HCT116 (cell line): ENCODE measurements at regions of chr5 and their contacts with region 1.

Region 1: DNA sequence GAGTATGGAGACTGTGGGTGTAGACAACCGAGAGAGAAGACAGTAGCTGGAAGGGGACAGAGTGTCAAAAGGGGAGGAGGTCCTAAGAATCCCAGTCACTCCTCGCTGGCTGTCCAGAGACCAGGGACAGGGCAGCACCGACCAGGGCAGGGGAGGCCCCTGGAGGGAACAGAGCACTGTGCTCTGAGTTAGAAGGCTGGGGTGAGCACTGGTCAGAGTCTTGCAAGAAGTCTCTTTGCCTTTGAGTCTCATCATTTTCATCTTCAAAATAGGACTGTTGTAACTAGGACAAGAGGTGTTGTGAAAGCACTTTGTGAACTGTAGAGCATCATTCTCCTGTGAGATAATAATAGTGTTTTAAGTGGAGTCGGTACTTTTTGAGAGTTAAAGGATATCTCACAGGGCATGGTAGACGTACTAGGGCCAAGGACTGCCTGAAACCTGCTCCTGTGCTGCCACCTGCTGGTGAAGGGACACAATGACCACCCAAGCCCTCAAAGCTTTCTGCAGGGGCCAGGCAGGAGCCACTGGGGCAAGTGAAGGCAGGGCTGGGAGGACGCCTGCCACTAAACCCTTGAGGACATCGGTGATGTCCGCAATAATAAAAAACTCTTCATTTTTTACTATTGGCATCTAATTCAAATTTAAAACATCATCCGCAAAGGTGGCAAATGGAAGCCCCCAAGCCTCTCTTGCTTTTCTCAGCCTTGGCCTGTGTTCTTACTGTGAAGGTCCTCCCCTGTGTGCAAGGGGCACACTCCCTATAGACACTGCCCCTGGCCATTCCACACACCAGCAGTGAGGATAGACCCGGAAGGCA is 28.2 kb downstream of the SLC6A7 start:
- DNase-seq: peak; percentile 64
- ATAC-seq: peak; percentile 99
- H3K4me3 ChIP-seq: no peak overlapping the region
- H3K27ac ChIP-seq: no peak overlapping the region
- H3K4me1 ChIP-seq: 0 out of 4 replicates have a peak, but pooled peaks cover 0 to 2% of the 10 kb centered on the region in 2 experiments
- H3K27me3 ChIP-seq: no peaks in the 10 kb centered on the region
- CTCF ChIP-seq: peak; percentile 87 to 96 (median 88)
- POLR2A ChIP-seq: no peak
- RAD21 ChIP-seq: peak; percentile 97

Region 2: DNA sequence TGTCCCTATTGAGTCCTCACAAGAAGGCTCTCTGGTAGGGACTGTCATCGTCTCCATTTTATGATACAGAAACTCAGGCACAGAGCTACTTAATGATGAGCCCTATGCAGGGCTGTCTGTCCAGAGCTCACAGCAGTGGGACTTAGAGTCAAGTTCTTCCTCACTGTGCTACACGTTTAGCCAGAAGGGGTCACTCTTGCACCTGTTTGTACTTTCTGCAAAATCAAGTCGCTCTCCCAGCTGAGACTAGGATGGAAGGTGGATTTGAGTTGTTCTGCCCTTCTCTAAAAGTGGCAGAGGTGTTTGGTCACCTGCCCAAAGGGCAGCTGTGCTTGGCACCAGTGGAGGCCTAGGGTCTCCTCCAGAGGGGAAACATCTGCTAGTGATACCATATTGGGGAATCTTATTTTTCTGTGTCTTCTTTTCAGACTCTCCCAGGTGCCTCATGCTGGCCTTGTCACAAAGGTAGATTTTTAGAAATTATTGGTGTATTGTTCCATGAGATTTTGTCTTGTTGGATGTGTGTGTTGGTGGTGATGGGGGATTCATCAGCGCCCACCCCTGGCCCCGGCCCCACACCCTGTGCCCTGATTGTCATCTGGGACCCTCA is 383.7 kb before region 1 on chr5:
- CTCF ChIA-PET with region 1: interaction called, 6 read pairs
- POLR2A ChIA-PET with region 1: no interaction called
- RAD21 ChIA-PET with region 1: no interaction called
- intact Hi-C with region 1: loop called (anchors 2 kb)
- DNase-seq: peak; percentile 74
- ATAC-seq: peak; percentile 65
- H3K4me3 ChIP-seq: no peak overlapping the region
- H3K27ac ChIP-seq: no peak overlapping the region
- H3K4me1 ChIP-seq: peaks cover 0 to 9% of the 10 kb centered on the region in 2 experiments; a peak in 2 of 4 replicates
- H3K27me3 ChIP-seq: no peaks in the 10 kb centered on the region
- CTCF ChIP-seq: peak; percentile 71 to 83 (median 78); a peak in 5 of 6 replicates
- POLR2A ChIP-seq: no peak
- RAD21 ChIP-seq: peak; percentile 83

Region 3: GRCh38 chr5:150044329-150044681 is 173.8 kb before region 1 on chr5:
- CTCF ChIA-PET with region 1: no interaction called
- POLR2A ChIA-PET with region 1: no interaction called
- RAD21 ChIA-PET with region 1: no interaction called
- intact Hi-C with region 1: loop called (anchors 10 kb)
- DNase-seq: no peak
- ATAC-seq: no peak
- H3K4me3 ChIP-seq: no peak overlapping the region
- H3K27ac ChIP-seq: peak overlapping the region; percentile 16; the same call in 1 of the 2 replicates
- H3K4me1 ChIP-seq: peaks cover 0 to 19% of the 10 kb centered on the region in 2 experiments; a peak in 2 of 4 replicates
- H3K27me3 ChIP-seq: no peaks in the 10 kb centered on the region
- CTCF ChIP-seq: no peak
- POLR2A ChIP-seq: no peak
- RAD21 ChIP-seq: no peak

Region 4: GRCh38 chr5:150161242-150162141 is 56.6 kb before region 1 on chr5:
- CTCF ChIA-PET with region 1: interaction called, 4 read pairs
- POLR2A ChIA-PET with region 1: no interaction called
- RAD21 ChIA-PET with region 1: no interaction called
- intact Hi-C with region 1: loop called (anchors 1 kb)
- DNase-seq: peak; percentile 63
- ATAC-seq: peak; percentile 93
- H3K4me3 ChIP-seq: peak overlapping the region; percentile 29 to 52
- H3K27ac ChIP-seq: peak overlapping the region; percentile 20; the same call in 1 of the 2 replicates
- H3K4me1 ChIP-seq: peaks cover 3 to 19% of the 10 kb centered on the region in 2 experiments; a peak in 3 of 4 replicates
- H3K27me3 ChIP-seq: no peaks in the 10 kb centered on the region
- CTCF ChIP-seq: peak in 2 of 3 experiments; percentile 78 to 96; a peak in 4 of 6 replicates
- POLR2A ChIP-seq: no peak
- RAD21 ChIP-seq: no peak

Region 5: DNA sequence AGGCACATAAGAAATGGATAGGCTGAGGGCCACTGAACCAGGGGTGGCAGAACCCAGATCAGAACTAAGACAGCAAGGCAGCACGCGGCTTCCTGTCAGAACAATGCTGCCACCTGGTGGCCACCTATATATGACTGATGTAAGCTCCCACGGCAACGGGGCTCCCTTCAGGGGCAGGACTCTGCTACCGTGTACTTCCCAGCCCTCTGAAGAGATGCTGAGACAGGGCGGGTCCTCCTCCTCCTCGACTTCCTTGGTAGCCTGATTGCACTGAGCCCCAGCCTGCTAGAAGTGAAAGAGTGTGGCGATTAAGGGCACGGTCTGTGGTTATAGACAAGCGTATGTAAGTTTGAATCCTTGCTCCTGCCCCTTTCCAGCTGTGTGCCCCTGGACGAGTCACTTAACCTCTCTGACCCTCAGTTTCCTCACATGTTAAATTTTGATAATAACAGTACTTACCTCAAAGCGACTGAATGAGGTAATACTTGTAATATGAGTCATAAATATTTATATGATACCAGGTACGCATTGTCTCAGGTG is 218.1 kb after region 1 on chr5:
- CTCF ChIA-PET with region 1: no interaction called
- POLR2A ChIA-PET with region 1: no interaction called
- RAD21 ChIA-PET with region 1: no interaction called
- intact Hi-C with region 1: loop called (anchors 2 kb)
- DNase-seq: peak; percentile 74
- ATAC-seq: peak; percentile 95
- H3K4me3 ChIP-seq: no peak overlapping the region
- H3K27ac ChIP-seq: no peak overlapping the region
- H3K4me1 ChIP-seq: peaks cover 7 to 13% of the 10 kb centered on the region in 2 experiments; a peak in 3 of 4 replicates
- H3K27me3 ChIP-seq: no peaks in the 10 kb centered on the region
- CTCF ChIP-seq: peak; percentile 76 to 93 (median 92)
- POLR2A ChIP-seq: no peak
- RAD21 ChIP-seq: peak; percentile 96